GM12878 (cell line): ENCODE measurements at regions of chr6 and their contacts with region 1.

Region 1: GRCh38 chr6:125995972-125996580 is 9.7 kb downstream of the TRMT11 start:
- DNase-seq: peak; percentile 28
- ATAC-seq: peak; percentile 90
- H3K4me3 ChIP-seq: no peak overlapping the region
- H3K27ac ChIP-seq: no peak overlapping the region
- H3K4me1 ChIP-seq: no peaks in the 10 kb centered on the region
- H3K27me3 ChIP-seq: no peaks in the 10 kb centered on the region
- CTCF ChIP-seq: peak; percentile 94 to 96 (median 95)
- EP300 ChIP-seq: no peak
- POLR2A ChIP-seq: no peak
- RAD21 ChIP-seq: peak; percentile 87

Region 2: GRCh38 chr6:125944434-125944816 is 51.7 kb before region 1 on chr6:
- CTCF ChIA-PET with region 1: no interaction called
- POLR2A ChIA-PET with region 1: no interaction called
- RAD21 ChIA-PET with region 1: no interaction called
- SMC1A ChIA-PET with region 1: no interaction called
- in situ Hi-C with region 1: no loop called
- intact Hi-C with region 1: no loop called
- DNase-seq: no peak
- ATAC-seq: no peak
- H3K4me3 ChIP-seq: no peak overlapping the region
- H3K27ac ChIP-seq: no peak overlapping the region
- H3K4me1 ChIP-seq: no peaks in the 10 kb centered on the region
- H3K27me3 ChIP-seq: no peaks in the 10 kb centered on the region
- CTCF ChIP-seq: no peak
- EP300 ChIP-seq: no peak
- POLR2A ChIP-seq: no peak
- RAD21 ChIP-seq: no peak

Region 3: GRCh38 chr6:125974214-125974866 is 21.7 kb before region 1 on chr6:
- CTCF ChIA-PET with region 1: interaction called, 30 read pairs
- POLR2A ChIA-PET with region 1: no interaction called
- RAD21 ChIA-PET with region 1: interaction called, 14 read pairs
- SMC1A ChIA-PET with region 1: interaction called, 10 read pairs
- in situ Hi-C with region 1: no loop called
- intact Hi-C with region 1: no loop called
- DNase-seq: no peak
- ATAC-seq: peak; percentile 93
- H3K4me3 ChIP-seq: no peak overlapping the region
- H3K27ac ChIP-seq: no peak overlapping the region
- H3K4me1 ChIP-seq: no peaks in the 10 kb centered on the region
- H3K27me3 ChIP-seq: no peaks in the 10 kb centered on the region
- CTCF ChIP-seq: peak; percentile 21 to 57 (median 49); a peak in 3 of 6 replicates
- EP300 ChIP-seq: no peak
- POLR2A ChIP-seq: no peak
- RAD21 ChIP-seq: peak; percentile 48

Region 4: DNA sequence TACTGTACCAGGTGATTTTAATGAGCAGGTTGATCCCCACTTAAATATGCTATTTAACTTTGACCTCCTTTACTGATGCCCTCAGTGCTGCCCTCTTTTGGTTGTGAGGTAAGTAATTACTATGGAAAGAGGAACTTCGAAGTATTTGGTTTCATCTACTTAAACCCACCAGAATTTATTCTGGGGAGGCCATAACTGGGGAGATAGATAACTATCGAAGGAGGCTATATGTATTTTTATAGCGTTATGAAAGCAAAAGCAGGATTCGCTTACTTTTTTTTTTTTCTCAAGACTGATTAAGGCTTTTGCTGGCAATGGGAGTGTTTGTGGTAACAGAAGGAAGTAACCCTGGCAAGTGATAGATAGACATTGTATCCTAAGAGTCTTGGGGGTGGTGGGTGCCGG is 174.9 kb after region 1 on chr6:
- CTCF ChIA-PET with region 1: interaction called, 13 read pairs
- POLR2A ChIA-PET with region 1: interaction called, 3 read pairs
- RAD21 ChIA-PET with region 1: interaction called, 7 read pairs
- SMC1A ChIA-PET with region 1: interaction called, 4 read pairs
- in situ Hi-C with region 1: no loop called
- intact Hi-C with region 1: loop called (anchors 2 kb)
- DNase-seq: peak; percentile 20
- ATAC-seq: peak; percentile 95
- H3K4me3 ChIP-seq: no peak overlapping the region
- H3K27ac ChIP-seq: no peak overlapping the region
- H3K4me1 ChIP-seq: no peaks in the 10 kb centered on the region
- H3K27me3 ChIP-seq: no peaks in the 10 kb centered on the region
- CTCF ChIP-seq: peak; percentile 44 to 57 (median 45)
- EP300 ChIP-seq: no peak
- POLR2A ChIP-seq: no peak
- RAD21 ChIP-seq: peak; percentile 42

Region 5: DNA sequence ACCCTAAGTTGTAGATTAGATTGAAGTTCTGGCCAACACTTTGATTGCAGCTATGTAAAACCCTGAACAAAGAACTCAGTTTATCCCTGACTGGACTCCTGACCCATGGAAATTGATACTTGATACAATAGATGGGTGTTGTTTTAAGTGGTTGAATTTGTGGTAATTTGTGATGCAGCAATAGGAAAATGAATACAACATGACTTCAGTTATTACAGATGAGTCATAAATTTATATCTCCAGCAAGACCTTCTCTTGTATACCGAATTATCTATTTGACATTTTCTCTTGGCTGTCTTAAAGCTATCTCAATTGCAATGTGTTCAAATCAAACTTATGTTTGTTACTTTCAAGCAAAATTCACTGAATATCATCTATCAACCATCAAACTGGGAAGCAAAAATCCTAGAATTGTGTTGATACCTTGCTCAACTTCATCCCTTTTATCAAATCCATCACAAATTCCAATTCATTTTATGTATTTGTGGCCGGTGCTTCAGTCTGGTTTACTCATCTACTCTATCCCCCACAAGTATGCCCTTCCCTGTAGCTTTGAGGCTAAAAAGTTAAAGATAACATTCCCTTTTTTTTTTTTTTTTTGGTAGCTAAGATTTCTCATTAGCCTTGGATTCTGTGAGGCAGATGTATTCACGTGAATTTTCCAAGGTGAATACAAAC is 214.5 kb after region 1 on chr6:
- CTCF ChIA-PET with region 1: no interaction called
- POLR2A ChIA-PET with region 1: no interaction called
- RAD21 ChIA-PET with region 1: no interaction called
- SMC1A ChIA-PET with region 1: no interaction called
- in situ Hi-C with region 1: no loop called
- intact Hi-C with region 1: no loop called
- DNase-seq: no peak
- ATAC-seq: no peak
- H3K4me3 ChIP-seq: no peak overlapping the region
- H3K27ac ChIP-seq: no peak overlapping the region
- H3K4me1 ChIP-seq: no peaks in the 10 kb centered on the region
- H3K27me3 ChIP-seq: no peaks in the 10 kb centered on the region
- CTCF ChIP-seq: no peak
- EP300 ChIP-seq: no peak
- POLR2A ChIP-seq: no peak
- RAD21 ChIP-seq: no peak

Region 6: DNA sequence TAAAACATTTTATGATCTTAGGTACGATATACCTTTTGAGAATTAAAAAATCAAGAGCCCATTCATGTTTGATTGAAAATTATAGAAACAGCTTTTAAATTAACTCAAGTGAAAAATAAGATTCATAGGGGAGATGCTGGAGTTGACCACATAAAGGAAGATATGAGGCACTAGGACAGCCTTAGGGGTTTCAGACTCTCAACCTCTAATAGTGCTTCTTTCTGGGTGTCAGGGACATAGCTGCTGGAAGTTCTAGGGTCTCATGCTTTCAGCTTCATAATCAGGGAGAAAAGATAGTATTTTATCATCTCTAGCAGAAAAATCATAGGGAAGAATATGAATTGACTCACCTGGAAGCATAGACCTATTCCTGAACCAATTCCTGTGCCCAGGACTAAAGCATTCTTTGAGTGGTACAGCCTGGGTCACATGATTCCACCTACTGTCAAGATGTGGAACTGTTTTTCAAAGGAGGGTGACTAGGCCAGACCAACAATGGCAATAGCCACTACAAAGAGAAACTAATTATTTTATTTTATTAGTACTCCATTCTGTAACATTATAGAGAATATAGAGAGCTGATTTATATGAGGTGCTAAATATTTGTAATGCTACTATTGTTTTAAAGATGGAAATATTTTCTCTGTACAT is 316.1 kb after region 1 on chr6:
- CTCF ChIA-PET with region 1: no interaction called
- POLR2A ChIA-PET with region 1: no interaction called
- RAD21 ChIA-PET with region 1: interaction called, 3 read pairs
- SMC1A ChIA-PET with region 1: interaction called, 3 read pairs
- in situ Hi-C with region 1: no loop called
- intact Hi-C with region 1: loop called (anchors 10 kb)
- DNase-seq: no peak
- ATAC-seq: peak; percentile 98
- H3K4me3 ChIP-seq: no peak overlapping the region
- H3K27ac ChIP-seq: no peak overlapping the region
- H3K4me1 ChIP-seq: no peaks in the 10 kb centered on the region
- H3K27me3 ChIP-seq: no peaks in the 10 kb centered on the region
- CTCF ChIP-seq: peak; percentile 30 to 44 (median 41); a peak in 4 of 6 replicates
- EP300 ChIP-seq: no peak
- POLR2A ChIP-seq: no peak
- RAD21 ChIP-seq: peak; percentile 39

Region 7: DNA sequence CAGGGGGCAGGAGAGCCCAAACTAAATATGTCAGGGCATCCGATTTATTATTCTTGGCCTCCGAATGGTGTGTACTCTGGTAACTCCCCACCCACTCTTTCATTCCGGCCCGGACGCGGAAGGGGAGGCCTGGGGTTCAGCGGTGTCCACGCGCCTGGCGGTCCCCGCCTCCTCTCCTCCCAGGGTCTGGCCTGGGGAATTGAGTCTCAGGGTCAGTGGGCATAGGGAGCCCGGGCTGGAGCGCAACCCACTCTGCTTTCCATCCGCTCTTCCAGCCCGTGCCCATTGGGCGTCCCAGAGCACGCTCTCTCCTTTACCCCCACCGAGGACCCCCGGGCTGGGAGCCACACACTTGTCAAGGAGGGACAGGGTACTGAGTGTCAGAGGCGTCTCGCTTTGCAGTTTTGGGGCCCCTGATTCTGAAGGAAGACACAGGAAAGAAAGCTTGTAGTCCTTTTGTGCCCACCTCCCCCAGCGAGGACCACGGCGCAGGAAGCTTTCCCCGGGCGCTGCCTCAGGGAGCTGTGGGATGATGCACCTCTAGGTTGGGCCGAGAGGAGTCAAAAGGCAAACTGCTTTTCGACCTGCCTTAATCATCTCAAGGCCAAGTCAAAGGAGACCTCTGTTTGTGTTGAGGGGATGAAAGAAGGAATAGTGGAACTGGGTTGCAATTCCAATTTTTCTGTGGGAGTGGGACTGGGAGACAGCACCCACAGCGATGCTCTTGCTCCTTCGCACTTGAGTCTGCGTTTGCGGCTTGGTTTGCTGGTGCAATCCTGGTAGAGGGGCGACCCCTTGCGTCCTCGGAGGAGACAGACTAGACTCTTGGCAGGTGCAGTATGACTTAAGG is 1124.9 kb after region 1 on chr6:
- CTCF ChIA-PET with region 1: no interaction called
- POLR2A ChIA-PET with region 1: no interaction called
- RAD21 ChIA-PET with region 1: no interaction called
- SMC1A ChIA-PET with region 1: no interaction called
- in situ Hi-C with region 1: loop called (anchors 10 kb)
- intact Hi-C with region 1: loop called (anchors 2 kb)
- DNase-seq: peak; percentile 24
- ATAC-seq: peak; percentile 90
- H3K4me3 ChIP-seq: no peak overlapping the region
- H3K27ac ChIP-seq: no peak overlapping the region
- H3K4me1 ChIP-seq: peaks cover 5% of the 10 kb centered on the region
- H3K27me3 ChIP-seq: peaks cover 9 to 24% of the 10 kb centered on the region in 2 experiments
- CTCF ChIP-seq: peak; percentile 81 to 96 (median 85)
- EP300 ChIP-seq: no peak
- POLR2A ChIP-seq: no peak
- RAD21 ChIP-seq: peak; percentile 97